ENCODE measurements at regions of chr10 and their contacts with region 1.

Region 1: GRCh38 chr10:62831346-62831745 is 15.2 kb upstream of the EGR2 start:
- DNase-seq: no peak
- ATAC-seq: no peak
- H3K4me3 ChIP-seq: no peak overlapping the region
- H3K27ac ChIP-seq: no peak overlapping the region
- H3K4me1 ChIP-seq: peaks cover 0 to 7% (median 0%) of the 10 kb centered on the region in 12 donors
- H3K27me3 ChIP-seq: no peaks in the 10 kb centered on the region
- CTCF ChIP-seq: no peak
- POLR2A ChIP-seq: no peak

Region 2: GRCh38 chr10:62870866-62871265 is 39.5 kb after region 1 on chr10:
- intact Hi-C with region 1: no loop called
- DNase-seq: no peak
- ATAC-seq: no peak
- H3K4me3 ChIP-seq: no peak overlapping the region
- H3K27ac ChIP-seq: no peak overlapping the region
- H3K4me1 ChIP-seq: no peaks in the 10 kb centered on the region
- H3K27me3 ChIP-seq: peaks cover 0 to 7% (median 0%) of the 10 kb centered on the region in 9 donors
- CTCF ChIP-seq: no peak
- POLR2A ChIP-seq: no peak

Region 3: DNA sequence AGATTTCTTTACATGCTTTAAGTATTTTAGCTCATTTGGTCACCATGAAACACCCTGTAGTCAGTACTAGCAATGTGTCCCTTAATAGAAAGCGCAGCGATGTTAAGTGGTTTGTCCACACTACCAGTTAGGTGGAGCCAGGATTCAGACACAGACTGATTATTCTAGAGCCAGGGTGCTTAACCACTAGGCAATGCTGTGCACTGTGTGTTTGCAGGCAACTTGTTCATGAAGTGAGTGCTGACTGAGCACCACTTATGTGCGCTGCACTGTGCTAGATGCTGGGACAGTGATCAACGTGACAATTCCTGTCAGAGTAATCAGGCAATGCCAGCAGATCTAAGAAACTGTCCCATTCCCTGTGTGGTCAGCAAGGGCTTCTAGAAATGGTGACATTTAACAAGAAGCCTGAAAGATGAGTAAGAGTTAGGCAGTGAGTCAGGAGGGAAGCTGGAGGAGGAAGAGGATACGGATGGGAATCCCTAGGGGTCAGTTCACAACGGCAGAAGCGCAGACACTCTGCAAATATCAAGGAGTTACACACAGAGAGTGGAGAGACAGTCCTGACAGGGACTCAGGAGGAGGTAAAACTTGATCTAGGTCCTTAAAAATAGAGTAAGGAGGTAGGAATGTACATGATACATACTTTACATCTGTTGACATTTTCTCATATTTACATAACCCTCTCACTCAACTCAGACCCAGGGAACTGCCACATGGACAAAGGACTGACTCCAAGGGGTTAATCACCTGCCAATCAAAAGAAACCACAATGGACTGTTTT is 54.5 kb after region 1 on chr10:
- intact Hi-C with region 1: loop called in 1 of 10 experiments (anchors 10 kb)
- DNase-seq: peak in 1 of 5 donors; percentile 24
- ATAC-seq: peak; percentile 44 to 71 (median 56)
- H3K4me3 ChIP-seq: no peak overlapping the region
- H3K27ac ChIP-seq: no peak overlapping the region
- H3K4me1 ChIP-seq: peaks cover 0 to 4% (median 0%) of the 10 kb centered on the region in 12 donors
- H3K27me3 ChIP-seq: peaks cover 0 to 29% (median 3%) of the 10 kb centered on the region in 9 donors
- CTCF ChIP-seq: no peak
- POLR2A ChIP-seq: no peak

Measured in heart left ventricle (tissue), 16 donors.